ENCODE measurements at regions of chr2 and their contacts with region 1.

Region 1: DNA sequence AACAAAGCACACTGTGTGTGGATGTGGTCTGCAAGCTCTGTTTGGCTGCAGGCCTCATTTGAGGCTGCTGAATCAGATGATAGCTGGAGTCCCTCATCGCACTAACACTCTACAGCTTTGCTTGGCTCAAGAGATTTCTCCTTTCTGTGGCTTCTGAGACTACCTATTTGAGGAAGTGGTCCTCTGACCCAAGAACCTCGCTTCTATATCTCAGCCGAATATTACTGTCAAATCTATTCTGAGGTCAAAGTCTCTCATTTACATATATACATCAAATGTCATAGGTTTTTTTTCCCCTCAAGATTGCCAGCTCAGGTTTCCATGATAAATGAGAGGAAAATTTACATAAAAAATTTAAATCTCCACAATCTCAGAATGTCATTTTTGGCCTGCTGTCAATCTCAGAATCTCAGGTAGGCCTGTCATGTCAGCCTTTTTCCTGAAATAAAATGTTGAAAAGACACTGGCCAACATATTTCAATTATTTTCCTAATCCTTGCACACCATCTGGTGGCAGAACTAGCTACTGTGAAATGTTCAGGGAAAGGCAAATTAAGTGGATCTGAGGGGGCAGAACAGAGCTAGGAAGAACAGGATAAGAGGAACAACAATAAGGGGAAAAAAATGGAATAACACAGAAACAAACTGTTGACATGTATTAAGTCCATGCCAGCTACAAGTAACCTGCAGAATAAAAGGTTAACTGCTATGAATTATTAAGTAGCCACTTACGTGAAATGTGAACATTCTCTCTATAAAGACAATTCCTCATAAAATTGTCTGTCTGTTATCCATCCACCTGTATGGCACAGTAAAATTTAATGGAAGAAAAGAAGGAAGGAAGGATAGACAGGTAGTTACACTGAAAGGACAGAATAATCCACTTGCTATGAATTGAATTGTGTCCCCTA is 39.3 kb downstream of the AP1S3 start:
- DNase-seq: no peak
- ATAC-seq: peak in 3 of 4 donors; percentile 48 to 62 (median 54)
- H3K4me3 ChIP-seq: no peak overlapping the region
- H3K27ac ChIP-seq: no peak overlapping the region
- H3K4me1 ChIP-seq: no peaks in the 10 kb centered on the region
- H3K27me3 ChIP-seq: no peaks in the 10 kb centered on the region
- CTCF ChIP-seq: peak; percentile 27 to 71 (median 62)
- POLR2A ChIP-seq: no peak

Region 2: GRCh38 chr2:222969491-222969890 is 828.6 kb before region 1 on chr2:
- intact Hi-C with region 1: loop called (anchors 1 to 5 kb)
- DNase-seq: no peak
- ATAC-seq: no peak
- H3K4me3 ChIP-seq: no peak overlapping the region
- H3K27ac ChIP-seq: no peak overlapping the region
- H3K4me1 ChIP-seq: peaks cover 0 to 8% (median 0%) of the 10 kb centered on the region in 12 donors
- H3K27me3 ChIP-seq: no peaks in the 10 kb centered on the region
- CTCF ChIP-seq: no peak
- POLR2A ChIP-seq: no peak

Region 3: DNA sequence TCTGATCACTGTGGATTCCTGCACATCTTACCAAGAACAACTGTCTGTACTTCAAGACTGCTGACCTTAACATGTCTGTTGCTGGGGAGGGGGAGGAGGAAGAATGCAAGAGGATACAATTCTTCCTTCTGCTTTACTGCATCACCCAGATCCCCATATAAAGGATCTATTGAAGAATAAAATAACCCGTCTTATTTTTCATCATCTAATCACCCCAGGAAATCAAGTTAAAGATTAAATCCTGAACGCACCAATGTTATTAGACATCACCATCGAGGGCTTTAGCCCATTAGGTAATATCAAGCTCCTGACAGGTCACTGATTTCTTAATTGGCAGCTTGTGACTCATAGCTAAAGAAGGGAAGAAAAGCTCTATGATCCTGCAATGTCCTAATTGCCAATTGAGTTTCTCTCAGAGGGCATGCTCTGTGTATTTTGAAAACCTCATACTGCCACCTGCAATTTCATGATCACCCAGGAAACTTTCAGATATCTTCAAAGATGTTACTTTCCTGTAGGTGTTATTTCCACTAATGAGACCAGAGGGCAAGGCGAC is 821.5 kb before region 1 on chr2:
- intact Hi-C with region 1: loop called (anchors 1 to 5 kb)
- DNase-seq: no peak
- ATAC-seq: no peak
- H3K4me3 ChIP-seq: no peak overlapping the region
- H3K27ac ChIP-seq: no peak overlapping the region
- H3K4me1 ChIP-seq: peaks cover 0 to 8% (median 0%) of the 10 kb centered on the region in 12 donors
- H3K27me3 ChIP-seq: no peaks in the 10 kb centered on the region
- CTCF ChIP-seq: no peak
- POLR2A ChIP-seq: no peak

Region 4: GRCh38 chr2:223459328-223459939 is 338.6 kb before region 1 on chr2:
- intact Hi-C with region 1: loop called in 2 of 10 experiments (anchors 10 kb)
- DNase-seq: no peak
- ATAC-seq: no peak
- H3K4me3 ChIP-seq: no peak overlapping the region
- H3K27ac ChIP-seq: no peak overlapping the region
- H3K4me1 ChIP-seq: peaks cover 0 to 14% (median 0%) of the 10 kb centered on the region in 12 donors
- H3K27me3 ChIP-seq: no peaks in the 10 kb centered on the region
- CTCF ChIP-seq: peak in 11 of 12 donors; percentile 16 to 56 (median 40)
- POLR2A ChIP-seq: no peak

Region 5: DNA sequence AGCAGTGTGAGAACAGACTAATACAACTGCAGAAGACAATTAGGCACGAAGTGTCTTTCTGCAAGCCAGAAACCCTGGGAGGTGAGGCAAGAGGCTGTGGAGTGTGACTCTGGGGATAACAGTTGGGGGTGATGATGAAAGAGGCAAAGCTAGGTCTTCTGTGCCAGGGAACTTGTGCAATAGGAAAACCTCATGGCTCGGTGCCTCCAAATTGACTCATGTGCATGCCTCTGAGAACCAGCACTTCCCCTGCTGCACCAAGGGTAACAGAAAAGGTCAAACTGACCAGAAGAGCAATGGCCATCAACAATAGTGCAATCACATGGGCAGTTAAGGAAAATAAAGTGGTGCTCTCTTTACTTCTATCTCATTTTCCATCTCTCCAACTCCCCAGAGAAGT is 332.3 kb before region 1 on chr2:
- intact Hi-C with region 1: loop called in 2 of 10 experiments (anchors 5 to 10 kb)
- DNase-seq: peak; percentile 52 to 85 (median 65)
- ATAC-seq: peak; percentile 54 to 97 (median 89)
- H3K4me3 ChIP-seq: no peak overlapping the region
- H3K27ac ChIP-seq: peak overlapping the region in 1 of 12 donors; percentile 56
- H3K4me1 ChIP-seq: peaks cover 0 to 32% (median under 1%) of the 10 kb centered on the region in 12 donors
- H3K27me3 ChIP-seq: no peaks in the 10 kb centered on the region
- CTCF ChIP-seq: no peak
- POLR2A ChIP-seq: no peak

Region 6: DNA sequence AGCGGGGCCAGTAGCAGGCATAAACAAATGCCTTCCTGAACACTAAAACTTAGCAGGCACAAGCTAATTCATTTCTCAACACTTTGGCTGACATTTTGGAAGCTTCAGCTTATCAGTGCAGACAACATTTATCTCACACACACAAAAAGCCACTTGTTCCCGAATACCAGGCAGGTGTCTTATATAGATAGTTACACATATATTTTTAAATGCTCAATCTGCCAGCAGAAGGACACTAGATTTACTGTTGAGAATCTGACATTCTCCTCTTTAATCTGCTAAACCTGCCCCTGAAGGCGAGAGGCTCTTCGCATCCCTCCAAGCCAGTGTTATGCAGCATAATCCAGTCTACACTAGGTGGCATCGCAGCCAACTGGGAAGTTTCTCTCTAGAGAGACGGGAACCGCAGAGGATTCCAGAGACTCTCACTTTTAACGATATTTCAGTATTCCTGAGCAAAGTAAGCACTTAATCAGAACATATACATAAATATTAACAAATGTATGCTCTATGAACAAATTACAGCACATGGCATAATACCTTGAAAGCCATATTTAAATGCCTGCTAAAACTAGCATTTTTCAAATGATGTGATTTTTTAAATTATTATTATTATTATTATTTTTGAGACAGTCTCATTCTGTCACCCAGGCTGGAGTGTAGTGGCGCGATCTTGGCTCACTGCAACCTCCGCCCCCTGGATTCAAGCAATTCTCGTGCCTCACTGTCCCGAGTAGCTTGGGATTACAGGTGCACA is 105.7 kb before region 1 on chr2:
- intact Hi-C with region 1: loop called in 8 of 10 experiments (anchors 1 to 10 kb)
- DNase-seq: peak in 3 of 5 donors; percentile 16 to 35 (median 21)
- ATAC-seq: peak in 3 of 4 donors; percentile 69 to 83 (median 79)
- H3K4me3 ChIP-seq: no peak overlapping the region
- H3K27ac ChIP-seq: no peak overlapping the region
- H3K4me1 ChIP-seq: no peaks in the 10 kb centered on the region
- H3K27me3 ChIP-seq: peaks cover 0 to 6% (median 0%) of the 10 kb centered on the region in 9 donors
- CTCF ChIP-seq: peak; percentile 30 to 70 (median 58)
- POLR2A ChIP-seq: no peak

Measured in heart left ventricle (tissue), 16 donors.